Right ventricle myocardium inferior (tissue), 1 donor: ENCODE measurements at regions of chr3 and their contacts with region 1.

Region 1: DNA sequence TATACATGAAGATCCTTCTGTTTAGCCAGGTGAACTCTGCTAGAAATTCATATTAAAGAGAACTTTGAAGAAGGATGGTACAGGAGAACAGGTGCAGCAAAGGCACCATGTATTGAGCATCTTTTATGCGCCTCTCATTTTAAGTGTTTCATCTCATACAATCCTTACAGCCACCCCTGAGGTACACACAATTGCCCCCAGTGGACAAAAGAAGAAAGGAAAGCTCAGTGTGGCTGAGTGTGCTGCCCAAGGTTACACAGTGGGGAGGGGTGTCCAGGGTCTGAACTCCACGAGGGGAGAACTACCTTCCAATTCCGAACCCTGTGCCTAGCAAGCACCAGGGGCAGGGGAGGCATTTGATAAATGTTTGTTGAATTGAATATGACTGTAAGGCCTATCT is 98.6 kb downstream of the MECOM start:
- DNase-seq: no peak
- ATAC-seq: no peak

Region 2: GRCh38 chr3:169581633-169582032 is 16.8 kb after region 1 on chr3:
- intact Hi-C with region 1: loop called (anchors 1 kb)
- DNase-seq: no peak
- ATAC-seq: no peak